ENCODE measurements at regions of chr2 and their contacts with region 1.

Region 1: GRCh38 chr2:169933124-169933711 is 106.0 kb downstream of the UBR3 start:
- DNase-seq: no peak
- H3K4me3 ChIP-seq: no peak overlapping the region
- H3K27ac ChIP-seq: no peak overlapping the region
- H3K27me3 ChIP-seq: no peaks in the 10 kb centered on the region
- CTCF ChIP-seq: peak; percentile 88

Region 2: DNA sequence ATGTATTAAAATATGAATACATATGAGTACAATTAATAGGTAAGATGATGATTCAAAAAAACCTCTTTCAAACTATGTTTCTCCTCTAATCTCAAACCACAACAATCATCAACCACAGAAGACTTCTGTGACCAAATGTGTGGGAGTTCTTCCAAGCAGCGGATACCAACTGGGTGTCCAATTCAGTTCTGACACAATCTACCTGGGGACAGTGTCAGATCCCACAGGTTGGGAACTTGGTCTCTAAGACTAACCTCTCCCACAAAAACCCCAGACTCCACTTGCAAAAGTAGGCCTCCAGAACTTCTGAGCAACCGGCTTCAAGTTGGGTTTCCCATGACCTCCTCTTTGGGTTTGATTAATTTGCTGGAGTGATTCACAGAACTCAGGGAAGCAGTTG is 386.5 kb before region 1 on chr2:
- CTCF ChIA-PET with region 1: no interaction called
- POLR2A ChIA-PET with region 1: no interaction called
- DNase-seq: no peak
- H3K4me3 ChIP-seq: no peak overlapping the region
- H3K27ac ChIP-seq: no peak overlapping the region
- H3K27me3 ChIP-seq: no peaks in the 10 kb centered on the region
- CTCF ChIP-seq: no peak

Region 3: GRCh38 chr2:169945515-169945914 is 12.3 kb after region 1 on chr2:
- CTCF ChIA-PET with region 1: interaction called, 13 read pairs
- POLR2A ChIA-PET with region 1: no interaction called
- DNase-seq: no peak
- H3K4me3 ChIP-seq: no peak overlapping the region
- H3K27ac ChIP-seq: no peak overlapping the region
- H3K27me3 ChIP-seq: no peaks in the 10 kb centered on the region
- CTCF ChIP-seq: no peak

Region 4: DNA sequence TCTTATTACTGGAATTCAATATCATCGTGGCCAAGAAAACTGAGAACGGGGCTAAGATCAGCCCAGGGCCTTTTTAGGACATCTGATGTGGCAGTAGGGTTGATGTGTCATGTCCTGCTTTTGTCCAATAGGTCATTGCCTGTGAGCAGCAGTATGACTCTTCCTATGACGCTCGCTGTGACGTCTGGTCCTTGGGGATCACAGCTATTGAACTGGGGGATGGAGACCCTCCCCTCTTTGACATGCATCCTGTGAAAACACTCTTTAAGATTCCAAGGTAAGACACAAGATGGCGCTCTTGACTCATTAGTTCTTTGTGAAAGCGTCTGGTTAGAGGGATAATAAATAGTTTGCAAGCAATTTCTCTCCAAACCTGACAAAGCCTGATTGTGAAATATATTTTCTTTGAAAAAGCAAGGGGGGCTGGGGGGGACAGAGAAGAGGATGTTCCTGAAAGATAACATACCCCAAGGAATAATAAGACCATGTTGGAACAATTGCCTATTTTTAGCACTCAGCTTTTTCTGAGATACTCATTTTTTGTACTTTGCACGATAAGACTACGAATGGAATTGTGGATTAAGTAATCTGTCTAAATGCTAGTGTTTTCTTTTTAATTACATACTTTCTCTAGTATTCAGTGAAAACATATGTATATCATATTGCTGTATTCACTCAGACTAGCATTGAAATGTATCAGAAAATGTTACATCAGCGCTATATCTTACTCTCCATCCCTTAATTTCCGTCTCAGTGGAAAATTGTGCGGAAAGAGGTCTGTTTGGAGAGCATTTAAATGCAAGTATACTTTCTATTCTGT is 302.9 kb after region 1 on chr2:
- CTCF ChIA-PET with region 1: interaction called, 10 read pairs
- POLR2A ChIA-PET with region 1: no interaction called
- DNase-seq: no peak
- H3K4me3 ChIP-seq: no peak overlapping the region
- H3K27ac ChIP-seq: no peak overlapping the region
- H3K27me3 ChIP-seq: peaks cover 6% of the 10 kb centered on the region
- CTCF ChIP-seq: peak; percentile 62

Measured in AG04450 (cell line).